Activated CD8-positive, alpha-beta T cell treated with anti-CD3 and anti-CD28 coated beads for 36 hours (primary cell): ENCODE measurements at regions of chr19 and their contacts with region 1.

Region 1: GRCh38 chr19:43463381-43464136 is 1.8 kb downstream of the LYPD3 start:
- DNase-seq: peak; percentile 100
- ATAC-seq: peak; percentile 87
- H3K4me3 Mint-ChIP-seq: peak overlapping the region; percentile 84
- H3K27ac Mint-ChIP-seq: peak overlapping the region; percentile 94
- H3K4me1 Mint-ChIP-seq: peaks cover 41% of the 10 kb centered on the region
- H3K27me3 Mint-ChIP-seq: no peaks in the 10 kb centered on the region
- CTCF ChIP-seq: no peak

Region 2: GRCh38 chr19:43474986-43475705 is 11.6 kb after region 1 on chr19:
- CTCF ChIA-PET with region 1: interaction called, 6 read pairs
- POLR2A ChIA-PET with region 1: interaction called, 23 read pairs
- intact Hi-C with region 1: no loop called
- DNase-seq: peak; percentile 95
- ATAC-seq: peak; percentile 93
- H3K4me3 Mint-ChIP-seq: peak overlapping the region; percentile 75
- H3K27ac Mint-ChIP-seq: peak overlapping the region; percentile 86
- H3K4me1 Mint-ChIP-seq: peaks cover 30% of the 10 kb centered on the region
- H3K27me3 Mint-ChIP-seq: no peaks in the 10 kb centered on the region
- CTCF ChIP-seq: no peak

Region 3: GRCh38 chr19:43503501-43504425 is 40.2 kb after region 1 on chr19:
- CTCF ChIA-PET with region 1: interaction called, 6 read pairs
- POLR2A ChIA-PET with region 1: interaction called, 4 read pairs
- intact Hi-C with region 1: loop called (anchors 5 kb)
- DNase-seq: peak; percentile 100
- ATAC-seq: peak; percentile 97
- H3K4me3 Mint-ChIP-seq: peak overlapping the region; percentile 96
- H3K27ac Mint-ChIP-seq: peak overlapping the region; percentile 97
- H3K4me1 Mint-ChIP-seq: peaks cover 18% of the 10 kb centered on the region
- H3K27me3 Mint-ChIP-seq: no peaks in the 10 kb centered on the region
- CTCF ChIP-seq: no peak